ENCODE measurements at regions of chr11 and their contacts with region 1.

Region 1: DNA sequence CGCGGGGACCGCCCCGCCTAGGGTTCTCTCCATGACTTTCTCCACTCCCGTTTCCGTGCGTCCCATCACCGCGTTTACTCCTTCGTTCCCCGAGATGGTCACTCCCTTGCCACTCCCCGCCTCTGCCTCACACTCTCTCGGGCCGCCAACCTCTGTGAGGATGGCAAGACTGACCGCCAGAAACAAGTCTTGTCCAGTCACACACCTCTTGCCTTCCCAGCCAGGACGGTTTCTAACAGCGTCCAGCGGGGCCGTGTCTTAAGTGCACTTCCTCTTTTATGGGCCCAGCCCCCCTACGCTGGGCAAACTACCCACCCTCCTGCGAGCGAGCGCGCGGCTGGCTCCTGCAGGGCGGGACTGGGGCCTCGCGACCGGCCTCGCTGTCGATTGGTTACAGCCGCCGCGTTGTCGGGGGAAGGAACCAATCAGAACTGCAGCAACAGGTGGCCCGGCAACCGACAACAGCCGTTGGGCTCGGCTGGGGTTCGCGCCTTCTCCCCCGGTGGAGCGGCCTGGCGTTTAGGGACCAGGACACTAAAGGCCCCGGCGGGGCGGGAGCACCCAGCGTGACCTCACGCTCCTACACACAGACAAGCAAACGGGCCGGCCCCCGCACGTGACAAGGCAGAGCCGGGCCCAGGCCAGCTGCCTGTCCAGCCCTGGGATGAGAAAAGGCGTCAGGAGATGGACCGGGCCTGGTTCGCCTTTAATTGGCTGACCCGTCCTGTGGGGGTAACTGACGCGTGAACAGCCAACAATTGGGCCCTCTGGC is 512 bp upstream of the UCP2 start:
- DNase-seq: peak; percentile 89
- ATAC-seq: peak; percentile 85
- H3K4me3 ChIP-seq: peak overlapping the region; percentile 79
- H3K27ac ChIP-seq: peak overlapping the region; percentile 85
- H3K4me1 ChIP-seq: peaks cover 29% of the 10 kb centered on the region
- H3K27me3 ChIP-seq: no peaks in the 10 kb centered on the region
- CTCF ChIP-seq: no peak
- EP300 ChIP-seq: peak in 1 of 2 experiments; percentile 4; a peak in 1 of 4 replicates
- POLR2A ChIP-seq: peak; percentile 97
- RAD21 ChIP-seq: no peak

Region 2: GRCh38 chr11:73787643-73788537 is 195.3 kb before region 1 on chr11 and contains the start of gene MRPL48:
- CTCF ChIA-PET with region 1: no interaction called
- POLR2A ChIA-PET with region 1: interaction called, 14 read pairs
- RAD21 ChIA-PET with region 1: no interaction called
- SMC1A ChIA-PET with region 1: no interaction called
- in situ Hi-C with region 1: no loop called
- intact Hi-C with region 1: no loop called
- DNase-seq: peak; percentile 72
- ATAC-seq: peak; percentile 99
- H3K4me3 ChIP-seq: peak within 1 kb of the TSS; percentile 83
- H3K27ac ChIP-seq: peak within 1 kb of the TSS; percentile 83
- H3K4me1 ChIP-seq: peaks cover 3% of the 10 kb centered on the region; the same call in 1 of the 2 replicates
- H3K27me3 ChIP-seq: no peaks in the 10 kb centered on the region
- CTCF ChIP-seq: no peak
- EP300 ChIP-seq: 0 out of 4 replicates have a peak, but pooled peaks of 1 of the 2 experiments have one; percentile 7
- POLR2A ChIP-seq: peak; percentile 94
- RAD21 ChIP-seq: no peak
- polyA plus RNA-seq, gene MRPL48: 149 to 159 TPM

Region 3: GRCh38 chr11:73800276-73800806 is 182.8 kb before region 1 on chr11:
- CTCF ChIA-PET with region 1: no interaction called
- POLR2A ChIA-PET with region 1: no interaction called
- RAD21 ChIA-PET with region 1: no interaction called
- SMC1A ChIA-PET with region 1: no interaction called
- in situ Hi-C with region 1: no loop called
- intact Hi-C with region 1: no loop called
- DNase-seq: no peak
- ATAC-seq: no peak
- H3K4me3 ChIP-seq: no peak overlapping the region
- H3K27ac ChIP-seq: no peak overlapping the region
- H3K4me1 ChIP-seq: no peaks in the 10 kb centered on the region
- H3K27me3 ChIP-seq: no peaks in the 10 kb centered on the region
- CTCF ChIP-seq: no peak
- EP300 ChIP-seq: no peak
- POLR2A ChIP-seq: no peak
- RAD21 ChIP-seq: no peak

Region 4: GRCh38 chr11:74004759-74005615 is 21.8 kb after region 1 on chr11:
- CTCF ChIA-PET with region 1: interaction called, 4 read pairs
- POLR2A ChIA-PET with region 1: no interaction called
- RAD21 ChIA-PET with region 1: interaction called, 12 read pairs
- SMC1A ChIA-PET with region 1: interaction called, 19 read pairs
- in situ Hi-C with region 1: no loop called
- intact Hi-C with region 1: no loop called
- DNase-seq: no peak
- ATAC-seq: peak; percentile 85
- H3K4me3 ChIP-seq: no peak overlapping the region
- H3K27ac ChIP-seq: no peak overlapping the region
- H3K4me1 ChIP-seq: peaks cover 7% of the 10 kb centered on the region
- H3K27me3 ChIP-seq: no peaks in the 10 kb centered on the region
- CTCF ChIP-seq: no peak
- EP300 ChIP-seq: no peak
- POLR2A ChIP-seq: no peak
- RAD21 ChIP-seq: no peak

Region 5: GRCh38 chr11:74018331-74019005 is 35.3 kb after region 1 on chr11:
- CTCF ChIA-PET with region 1: interaction called, 5 read pairs
- POLR2A ChIA-PET with region 1: interaction called, 20 read pairs
- RAD21 ChIA-PET with region 1: interaction called, 31 read pairs
- SMC1A ChIA-PET with region 1: interaction called, 49 read pairs
- in situ Hi-C with region 1: no loop called
- intact Hi-C with region 1: loop called (anchors 5 kb)
- DNase-seq: no peak
- ATAC-seq: no peak
- H3K4me3 ChIP-seq: no peak overlapping the region
- H3K27ac ChIP-seq: no peak overlapping the region
- H3K4me1 ChIP-seq: peaks cover 21% of the 10 kb centered on the region
- H3K27me3 ChIP-seq: no peaks in the 10 kb centered on the region
- CTCF ChIP-seq: no peak
- EP300 ChIP-seq: no peak
- POLR2A ChIP-seq: no peak
- RAD21 ChIP-seq: no peak

Region 6: GRCh38 chr11:74170694-74171629 is 187.8 kb after region 1 on chr11 and contains the starts of genes C2CD3 and PPME1:
- CTCF ChIA-PET with region 1: interaction called, 4 read pairs
- POLR2A ChIA-PET with region 1: interaction called, 15 read pairs
- RAD21 ChIA-PET with region 1: interaction called, 21 read pairs
- SMC1A ChIA-PET with region 1: interaction called, 19 read pairs
- in situ Hi-C with region 1: no loop called
- intact Hi-C with region 1: loop called (anchors 5 kb)
- DNase-seq: peak; percentile 100
- ATAC-seq: peak; percentile 96
- H3K4me3 ChIP-seq: peak within 1 kb of the TSS; percentile 95
- H3K27ac ChIP-seq: peak within 1 kb of the TSS; percentile 69
- H3K4me1 ChIP-seq: peaks cover 3% of the 10 kb centered on the region; the same call in 1 of the 2 replicates
- H3K27me3 ChIP-seq: no peaks in the 10 kb centered on the region
- CTCF ChIP-seq: peak; percentile 11 to 36 (median 11); a peak in 2 of 6 replicates
- EP300 ChIP-seq: 0 out of 4 replicates have a peak, but pooled peaks of 1 of the 2 experiments have one; percentile 16
- POLR2A ChIP-seq: peak; percentile 99
- RAD21 ChIP-seq: 0 out of 2 replicates have a peak, but pooled peaks have one; percentile 1
- polyA plus RNA-seq, gene C2CD3: 2.3 to 2.7 TPM
- polyA plus RNA-seq, gene PPME1: 3.1 to 3.3 TPM